Heart right ventricle (tissue), 16 donors: ENCODE measurements at regions of chr18 and their contacts with region 1.

Region 1: GRCh38 chr18:46281185-46282176 is 177.3 kb downstream of the HAUS1 start:
- DNase-seq: peak; percentile 57 to 64
- ATAC-seq: peak; percentile 70 to 88 (median 84)
- H3K4me3 ChIP-seq: no peak overlapping the region
- H3K27ac ChIP-seq: no peak overlapping the region
- H3K4me1 ChIP-seq: peaks cover 0 to 17% (median 12%) of the 10 kb centered on the region in 9 donors
- H3K27me3 ChIP-seq: no peaks in the 10 kb centered on the region
- CTCF ChIP-seq: peak; percentile 85 to 97 (median 92)

Region 2: DNA sequence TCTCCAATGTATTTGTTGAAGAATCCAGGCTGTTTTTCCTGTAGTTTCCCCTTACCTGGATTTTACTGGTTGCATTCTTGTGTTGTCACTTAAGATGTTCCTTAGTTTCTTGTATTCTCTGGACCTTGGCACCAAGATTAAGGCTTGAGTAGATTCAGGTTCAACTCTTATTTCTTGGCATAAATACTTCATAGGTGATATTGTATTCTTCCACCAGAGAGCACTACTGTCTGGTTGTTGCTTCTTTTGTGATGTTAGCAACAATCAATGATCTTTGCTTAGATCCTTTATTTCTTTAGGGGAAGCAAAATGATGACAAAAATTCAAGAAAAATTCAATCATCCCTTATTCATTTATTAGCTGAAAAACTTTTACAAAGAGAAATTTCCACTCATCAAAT is 164.4 kb after region 1 on chr18:
- intact Hi-C with region 1: loop called in 1 of 10 experiments (anchors 10 kb)
- DNase-seq: no peak
- ATAC-seq: no peak
- H3K4me3 ChIP-seq: no peak overlapping the region
- H3K27ac ChIP-seq: no peak overlapping the region
- H3K4me1 ChIP-seq: no peaks in the 10 kb centered on the region
- H3K27me3 ChIP-seq: no peaks in the 10 kb centered on the region
- CTCF ChIP-seq: peak in 1 of 9 donors; percentile 5

Region 3: DNA sequence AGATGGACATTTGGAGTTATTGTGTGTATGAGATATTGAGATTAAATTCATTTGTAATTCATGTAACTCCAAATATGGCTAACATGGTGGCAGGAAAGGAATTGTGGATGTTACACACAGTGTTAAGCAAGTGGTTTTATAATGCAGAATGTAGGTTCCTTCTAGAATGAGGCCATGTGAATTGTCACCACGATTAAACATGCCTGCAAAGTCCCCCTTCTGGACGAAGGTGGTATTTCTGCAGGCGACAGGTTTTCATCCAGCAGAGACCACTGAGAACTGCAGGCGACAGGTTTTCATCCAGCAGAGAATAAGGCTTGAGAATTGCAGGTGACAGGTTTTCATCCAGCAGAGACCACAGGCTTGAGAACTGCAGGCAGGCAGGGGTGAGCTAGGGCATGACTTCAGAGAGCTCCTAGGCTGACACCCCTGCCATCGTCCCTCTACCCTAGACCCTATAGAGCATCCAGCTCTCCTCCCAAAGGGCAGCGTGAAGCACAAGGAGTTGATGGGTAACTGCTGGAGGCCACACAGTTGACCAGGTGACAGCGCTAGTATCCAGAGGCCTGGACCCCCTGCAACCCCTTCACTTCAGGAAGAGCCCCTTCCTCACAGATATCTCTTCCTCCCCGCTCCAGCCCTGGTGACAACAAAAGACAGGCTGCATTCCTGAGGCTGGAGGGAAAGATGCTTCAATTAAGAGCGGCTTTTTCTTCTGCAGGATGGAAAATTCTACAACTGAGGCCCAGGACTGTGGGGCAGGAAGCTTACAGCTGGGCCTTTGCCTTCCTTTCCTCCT is 199.8 kb after region 1 on chr18:
- intact Hi-C with region 1: loop called in 9 of 10 experiments (anchors 1 to 10 kb)
- DNase-seq: peak in 1 of 2 donors; percentile 42
- ATAC-seq: peak in 6 of 8 donors; percentile 23 to 64 (median 60)
- H3K4me3 ChIP-seq: no peak overlapping the region
- H3K27ac ChIP-seq: no peak overlapping the region
- H3K4me1 ChIP-seq: peaks cover 0 to 9% (median 0%) of the 10 kb centered on the region in 9 donors
- H3K27me3 ChIP-seq: no peaks in the 10 kb centered on the region
- CTCF ChIP-seq: peak; percentile 55 to 81 (median 75)

Region 4: DNA sequence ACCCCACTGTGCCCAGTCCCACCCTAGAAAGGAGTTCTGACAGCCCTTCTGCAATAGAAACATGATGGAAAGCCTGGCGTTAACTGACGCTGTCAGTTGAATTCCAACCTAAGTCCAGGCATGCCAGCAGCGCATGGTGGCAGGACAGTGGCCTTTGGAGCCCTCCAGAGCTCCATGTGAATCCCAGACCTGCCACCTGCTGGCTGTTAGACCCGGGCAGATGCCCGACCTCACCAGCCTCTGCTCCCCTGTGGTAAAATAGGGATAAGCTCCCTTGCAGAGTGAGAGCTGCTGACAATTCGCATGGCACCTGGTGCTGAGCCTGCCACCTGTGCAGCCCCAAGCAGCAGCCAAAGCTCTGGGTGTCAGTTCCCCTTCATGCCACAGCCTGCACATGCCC is 237.0 kb after region 1 on chr18:
- intact Hi-C with region 1: loop called in 8 of 10 experiments (anchors 1 to 10 kb)
- DNase-seq: peak; percentile 34 to 45
- ATAC-seq: peak; percentile 77 to 93 (median 86)
- H3K4me3 ChIP-seq: no peak overlapping the region
- H3K27ac ChIP-seq: no peak overlapping the region
- H3K4me1 ChIP-seq: no peaks in the 10 kb centered on the region
- H3K27me3 ChIP-seq: no peaks in the 10 kb centered on the region
- CTCF ChIP-seq: peak; percentile 28 to 63 (median 54)

Region 5: GRCh38 chr18:46650681-46651080 is 369.2 kb after region 1 on chr18:
- intact Hi-C with region 1: loop called in 9 of 10 experiments (anchors 2 to 10 kb)
- DNase-seq: no peak
- ATAC-seq: no peak
- H3K4me3 ChIP-seq: no peak overlapping the region
- H3K27ac ChIP-seq: no peak overlapping the region
- H3K4me1 ChIP-seq: no peaks in the 10 kb centered on the region
- H3K27me3 ChIP-seq: no peaks in the 10 kb centered on the region
- CTCF ChIP-seq: no peak

Region 6: GRCh38 chr18:46660955-46661749 is 379.7 kb after region 1 on chr18:
- intact Hi-C with region 1: loop called in 8 of 10 experiments (anchors 2 to 10 kb)
- DNase-seq: no peak
- ATAC-seq: peak in 3 of 8 donors; percentile 27 to 47 (median 45)
- H3K4me3 ChIP-seq: no peak overlapping the region
- H3K27ac ChIP-seq: no peak overlapping the region
- H3K4me1 ChIP-seq: no peaks in the 10 kb centered on the region
- H3K27me3 ChIP-seq: no peaks in the 10 kb centered on the region
- CTCF ChIP-seq: no peak